ENCODE measurements at regions of chr15 and their contacts with region 1.

Region 1: GRCh38 chr15:99755692-99756409 is 22.6 kb upstream of the LYSMD4 start:
- DNase-seq: peak; percentile 38
- ATAC-seq: peak; percentile 85 to 89

Region 2: DNA sequence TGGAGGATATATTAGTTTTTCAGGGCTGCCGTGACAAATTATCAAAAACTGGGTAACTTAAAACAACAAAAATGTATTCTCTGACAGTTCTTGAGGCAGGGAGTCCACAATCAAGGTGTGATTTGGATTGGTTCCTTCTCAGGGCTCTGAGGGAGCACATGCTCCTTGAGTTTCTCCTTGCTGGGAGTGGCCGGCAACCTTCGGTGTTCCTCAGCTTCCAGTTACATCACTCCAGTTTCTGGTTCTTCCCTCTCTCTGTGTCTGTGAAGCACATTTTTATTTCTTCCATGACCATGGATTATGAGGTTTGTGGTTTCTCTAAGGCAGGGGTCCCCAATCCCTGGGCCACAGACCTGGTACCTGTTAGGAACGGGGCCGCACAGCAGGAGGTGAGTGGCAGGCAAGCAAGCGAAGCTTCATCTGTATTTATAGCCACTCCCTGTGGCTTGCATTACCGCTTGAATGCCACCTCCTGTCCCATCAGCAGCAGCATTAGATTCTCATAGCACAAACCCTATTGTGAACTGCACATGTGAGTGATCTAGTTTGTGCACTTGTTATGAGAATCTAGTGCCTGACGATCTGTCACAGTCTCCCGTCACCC is 480.2 kb before region 1 on chr15:
- intact Hi-C with region 1: loop called (anchors 2 to 10 kb)
- DNase-seq: no peak
- ATAC-seq: no peak

Region 3: GRCh38 chr15:99507504-99508310 is 248.1 kb before region 1 on chr15:
- intact Hi-C with region 1: no loop called
- DNase-seq: peak; percentile 76
- ATAC-seq: peak; percentile 84 to 85

Region 4: DNA sequence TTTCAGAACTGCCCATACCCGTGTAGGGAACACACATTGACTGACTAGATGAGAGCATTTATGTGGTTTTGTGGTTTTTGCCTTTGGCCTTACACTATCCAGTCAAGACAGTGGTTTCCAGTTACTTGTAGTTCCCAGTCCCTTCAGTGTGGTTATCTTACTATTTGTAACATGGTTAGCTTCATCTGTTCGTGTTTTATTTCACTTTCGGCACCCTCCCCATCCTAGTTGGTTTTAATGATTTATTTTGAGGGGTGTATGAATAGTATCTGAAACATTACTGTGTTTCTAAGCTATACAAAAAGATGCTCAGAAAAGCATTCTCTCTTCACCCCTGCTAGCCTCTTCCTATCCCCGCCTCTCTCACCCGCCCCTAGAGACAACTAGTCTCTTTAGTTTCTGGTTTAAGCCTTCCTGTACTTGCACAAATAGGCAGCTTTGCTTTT is 36.7 kb before region 1 on chr15:
- intact Hi-C with region 1: no loop called
- DNase-seq: no peak
- ATAC-seq: no peak

Region 5: DNA sequence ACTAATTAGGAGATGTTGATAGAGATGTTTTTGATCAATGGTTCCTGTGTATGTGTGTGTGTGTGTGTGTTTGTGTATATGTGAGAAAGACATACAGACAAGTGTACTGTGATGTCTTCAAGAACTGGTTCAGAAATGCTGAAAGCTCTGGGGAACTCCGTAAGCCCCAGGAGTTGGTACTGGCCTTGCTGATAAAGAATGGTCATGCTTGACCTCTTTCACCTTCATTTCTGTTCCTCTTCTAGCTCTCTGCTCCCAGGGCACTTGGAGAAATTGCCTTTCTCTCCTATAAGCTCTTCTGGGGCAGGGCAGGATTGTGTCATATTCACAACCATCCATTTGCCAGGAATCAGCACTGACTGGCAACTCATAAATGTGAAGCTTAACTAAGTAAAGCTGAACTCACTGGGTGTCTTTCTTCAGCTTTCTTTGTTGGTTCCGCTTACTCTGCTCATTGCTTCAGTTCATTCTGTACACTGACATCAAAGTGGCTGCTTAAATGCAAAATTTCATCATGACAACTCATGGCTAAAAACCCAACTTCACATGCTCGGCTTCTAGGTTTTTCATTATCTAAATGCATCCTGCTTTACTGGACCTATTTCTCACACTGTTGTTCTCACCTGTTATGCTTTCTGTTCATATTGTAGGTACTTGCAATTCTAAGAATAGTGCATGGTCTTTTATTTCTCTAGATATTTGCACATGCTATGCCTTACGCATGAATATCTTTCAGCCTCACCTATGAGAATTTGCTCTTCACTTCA is 139.5 kb after region 1 on chr15:
- intact Hi-C with region 1: no loop called
- DNase-seq: no peak
- ATAC-seq: no peak

Region 6: DNA sequence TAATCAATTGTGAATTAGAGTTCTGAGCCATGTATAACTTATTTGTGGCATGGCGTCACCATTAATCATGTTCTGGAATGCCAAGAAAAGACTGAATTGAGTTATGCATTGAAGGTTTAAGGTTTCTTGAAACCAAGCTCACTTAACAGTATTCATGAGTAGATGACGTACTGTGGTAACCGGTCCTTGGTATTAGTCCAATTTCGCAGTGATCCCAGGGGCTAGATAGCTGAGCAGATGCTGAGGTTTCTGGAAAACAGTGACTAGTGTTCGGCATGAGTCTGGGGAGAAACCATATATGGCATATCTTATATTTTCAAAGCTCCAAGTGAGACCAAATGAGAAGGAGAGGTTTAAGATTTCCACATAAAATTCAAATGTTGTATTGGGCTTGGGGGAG is 195.7 kb after region 1 on chr15:
- intact Hi-C with region 1: no loop called
- DNase-seq: no peak
- ATAC-seq: no peak